Activated B cell treated with CpG ODN at 0.5 μM for 24 hours (primary cell): ENCODE measurements at regions of chr6 and their contacts with region 1.

Region 1: GRCh38 chr6:132530293-132530974 is 7.6 kb upstream of the TAAR9 start:
- DNase-seq: no peak
- ATAC-seq: peak; percentile 82
- H3K4me3 Mint-ChIP-seq: peak overlapping the region; percentile 83
- H3K27ac Mint-ChIP-seq: no peak overlapping the region
- H3K4me1 Mint-ChIP-seq: peaks cover 8% of the 10 kb centered on the region
- H3K27me3 Mint-ChIP-seq: no peaks in the 10 kb centered on the region
- CTCF ChIP-seq: no peak

Region 2: DNA sequence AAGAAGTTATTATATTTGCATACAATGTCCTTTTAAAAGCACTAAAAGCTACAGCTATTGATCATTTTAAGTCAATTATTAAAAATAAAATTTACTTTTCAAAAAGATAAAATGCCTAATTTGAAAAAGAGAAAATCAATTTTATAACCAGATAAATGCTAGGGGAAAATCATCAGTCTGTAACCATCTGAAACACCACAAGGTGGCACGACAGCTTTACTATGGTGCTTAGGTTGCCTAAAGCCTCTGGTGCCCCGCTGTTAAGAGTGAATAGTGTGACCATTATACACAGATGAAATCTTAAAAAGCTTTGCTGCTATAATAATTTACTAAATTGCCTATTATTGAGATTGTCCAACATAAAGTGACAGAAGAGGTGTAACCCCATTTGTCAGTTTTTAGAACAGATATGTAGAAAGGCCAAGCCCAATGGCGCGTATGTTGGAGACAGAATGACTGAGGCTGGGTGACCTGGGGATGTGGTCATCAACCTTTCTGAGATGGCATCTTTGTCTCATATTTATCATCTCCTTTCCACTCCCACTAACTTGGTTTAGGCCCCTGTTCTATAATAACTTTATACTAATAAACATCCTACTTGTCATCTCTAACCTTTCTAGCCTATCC is 230.0 kb before region 1 on chr6:
- CTCF ChIA-PET with region 1: interaction called, 10 read pairs
- POLR2A ChIA-PET with region 1: no interaction called
- intact Hi-C with region 1: loop called (anchors 2 kb)
- DNase-seq: no peak
- ATAC-seq: peak; percentile 98
- H3K4me3 Mint-ChIP-seq: no peak overlapping the region
- H3K27ac Mint-ChIP-seq: no peak overlapping the region
- H3K4me1 Mint-ChIP-seq: no peaks in the 10 kb centered on the region
- H3K27me3 Mint-ChIP-seq: no peaks in the 10 kb centered on the region
- CTCF ChIP-seq: peak; percentile 67

Region 3: DNA sequence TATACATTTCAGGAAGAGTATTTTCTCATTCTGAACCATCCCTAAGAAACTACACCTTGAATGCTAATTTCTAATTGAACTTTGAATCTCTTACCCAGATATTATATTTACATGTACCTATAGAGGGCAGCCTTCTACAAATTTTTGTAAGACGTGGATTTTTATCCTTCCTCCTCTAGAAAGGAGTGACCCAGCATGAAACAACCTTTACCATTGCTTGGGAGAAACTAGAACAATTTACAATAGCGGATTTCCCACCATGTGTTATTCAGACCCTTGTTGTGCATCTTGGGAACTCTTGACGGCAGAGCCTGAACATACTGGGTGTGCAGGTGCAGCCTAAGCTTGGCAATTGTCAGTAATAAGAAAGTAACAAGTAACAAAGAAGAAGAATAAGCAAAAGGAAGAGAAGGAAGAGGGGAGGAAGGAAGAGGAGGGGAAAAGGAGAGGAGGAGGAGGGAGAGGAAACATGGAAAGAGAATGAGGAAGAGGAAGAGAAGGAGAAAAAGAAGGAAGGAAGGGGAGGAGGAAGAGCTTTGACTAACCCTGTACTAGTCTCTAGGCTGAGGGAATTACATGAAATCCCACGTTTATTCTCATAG is 139.4 kb after region 1 on chr6:
- CTCF ChIA-PET with region 1: interaction called, 11 read pairs
- POLR2A ChIA-PET with region 1: interaction called, 3 read pairs
- intact Hi-C with region 1: loop called (anchors 1 kb)
- DNase-seq: no peak
- ATAC-seq: peak; percentile 68
- H3K4me3 Mint-ChIP-seq: peak overlapping the region; percentile 55
- H3K27ac Mint-ChIP-seq: no peak overlapping the region
- H3K4me1 Mint-ChIP-seq: peaks cover 5% of the 10 kb centered on the region
- H3K27me3 Mint-ChIP-seq: no peaks in the 10 kb centered on the region
- CTCF ChIP-seq: peak; percentile 49

Region 4: DNA sequence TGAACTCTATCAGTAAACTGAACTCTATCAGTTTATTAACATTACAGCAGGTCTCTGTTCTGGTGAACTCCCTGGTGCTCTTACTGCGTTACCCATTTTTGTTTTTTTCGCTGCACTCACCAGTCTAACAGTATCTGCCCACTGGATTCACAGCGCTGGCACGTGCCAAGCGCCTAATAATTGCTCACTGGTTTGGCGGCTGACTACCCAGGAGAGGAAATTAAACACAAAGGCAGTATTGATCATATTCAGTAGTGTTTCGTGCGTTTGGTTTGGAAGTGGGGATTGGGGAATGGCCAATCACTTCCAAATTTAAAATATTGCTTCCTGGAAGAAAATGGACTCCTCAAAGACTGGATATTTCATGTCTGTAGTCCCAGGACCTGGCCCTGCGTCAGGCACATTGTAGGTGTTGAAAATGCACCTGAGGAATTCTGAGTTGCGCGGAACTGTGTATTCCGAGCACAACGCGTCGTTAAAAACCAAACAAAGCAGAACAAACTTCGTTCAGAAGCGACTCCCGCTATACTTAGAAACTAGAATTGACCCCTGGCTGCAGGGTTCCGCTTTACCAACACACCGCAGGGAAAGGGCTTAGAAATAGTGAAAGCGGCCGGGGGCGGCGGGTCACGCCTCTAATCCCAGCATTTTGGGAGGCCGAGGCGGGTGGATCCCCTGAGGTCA is 282.9 kb after region 1 on chr6:
- CTCF ChIA-PET with region 1: no interaction called
- POLR2A ChIA-PET with region 1: interaction called, 8 read pairs
- intact Hi-C with region 1: loop called (anchors 5 kb)
- DNase-seq: peak; percentile 33
- ATAC-seq: peak; percentile 17
- H3K4me3 Mint-ChIP-seq: peak overlapping the region; percentile 98
- H3K27ac Mint-ChIP-seq: peak overlapping the region; percentile 99
- H3K4me1 Mint-ChIP-seq: peaks cover 47% of the 10 kb centered on the region
- H3K27me3 Mint-ChIP-seq: no peaks in the 10 kb centered on the region
- CTCF ChIP-seq: no peak

Region 5: GRCh38 chr6:132893788-132894428 is 363.5 kb after region 1 on chr6:
- CTCF ChIA-PET with region 1: no interaction called
- POLR2A ChIA-PET with region 1: no interaction called
- intact Hi-C with region 1: no loop called
- DNase-seq: no peak
- ATAC-seq: no peak
- H3K4me3 Mint-ChIP-seq: no peak overlapping the region
- H3K27ac Mint-ChIP-seq: no peak overlapping the region
- H3K4me1 Mint-ChIP-seq: no peaks in the 10 kb centered on the region
- H3K27me3 Mint-ChIP-seq: peaks cover 4% of the 10 kb centered on the region
- CTCF ChIP-seq: no peak

Region 6: GRCh38 chr6:133512410-133513016 is 982.1 kb after region 1 on chr6:
- CTCF ChIA-PET with region 1: no interaction called
- POLR2A ChIA-PET with region 1: no interaction called
- intact Hi-C with region 1: loop called (anchors 1 kb)
- DNase-seq: no peak
- ATAC-seq: no peak
- H3K4me3 Mint-ChIP-seq: no peak overlapping the region
- H3K27ac Mint-ChIP-seq: no peak overlapping the region
- H3K4me1 Mint-ChIP-seq: no peaks in the 10 kb centered on the region
- H3K27me3 Mint-ChIP-seq: peaks cover 10% of the 10 kb centered on the region
- CTCF ChIP-seq: no peak

Region 7: DNA sequence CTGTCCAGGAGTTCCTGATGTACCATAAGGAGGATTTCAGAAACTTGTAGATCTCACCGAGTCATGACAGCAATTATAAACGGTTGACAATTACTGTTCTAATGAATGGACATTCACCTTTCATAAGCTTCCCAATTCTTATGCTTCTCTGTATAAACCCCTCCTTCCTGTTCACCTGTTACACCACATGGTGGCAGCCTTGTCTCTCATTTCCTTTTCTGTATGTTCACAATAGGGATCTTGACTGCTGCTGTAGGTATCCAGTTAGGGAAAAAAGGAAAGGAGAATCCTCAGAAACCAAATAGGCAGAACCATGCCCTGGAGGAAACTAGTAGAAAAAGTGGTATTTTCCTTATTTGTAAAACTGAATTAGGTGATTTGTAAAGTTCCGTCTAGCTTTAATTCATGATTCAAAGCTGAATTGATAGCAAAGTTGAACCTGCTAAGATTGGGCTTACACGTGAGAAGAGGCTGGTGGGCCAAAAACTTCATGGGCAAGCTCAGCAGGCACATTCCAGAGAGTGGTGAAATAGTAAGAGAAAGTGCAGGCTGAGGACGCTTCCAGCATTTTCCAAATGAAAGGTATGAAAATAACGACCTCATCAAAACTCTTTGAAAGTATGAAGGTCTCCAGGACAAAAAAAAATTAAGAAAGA is 1393.6 kb after region 1 on chr6:
- CTCF ChIA-PET with region 1: no interaction called
- POLR2A ChIA-PET with region 1: no interaction called
- intact Hi-C with region 1: loop called (anchors 2 kb)
- DNase-seq: no peak
- ATAC-seq: peak; percentile 88
- H3K4me3 Mint-ChIP-seq: no peak overlapping the region
- H3K27ac Mint-ChIP-seq: no peak overlapping the region
- H3K4me1 Mint-ChIP-seq: no peaks in the 10 kb centered on the region
- H3K27me3 Mint-ChIP-seq: peaks cover 22% of the 10 kb centered on the region
- CTCF ChIP-seq: peak; percentile 56